Mucosa of descending colon (tissue), 3 donors: ENCODE measurements at regions of chr7 and their contacts with region 1.

Region 1: GRCh38 chr7:107879400-107880035 is 11.5 kb upstream of the DLD start:
- DNase-seq: peak in 1 of 3 donors; percentile 74
- ATAC-seq: peak; percentile 84
- H3K4me3 ChIP-seq: no peak overlapping the region
- H3K4me1 ChIP-seq: no peaks in the 10 kb centered on the region
- CTCF ChIP-seq: peak; percentile 51

Region 2: DNA sequence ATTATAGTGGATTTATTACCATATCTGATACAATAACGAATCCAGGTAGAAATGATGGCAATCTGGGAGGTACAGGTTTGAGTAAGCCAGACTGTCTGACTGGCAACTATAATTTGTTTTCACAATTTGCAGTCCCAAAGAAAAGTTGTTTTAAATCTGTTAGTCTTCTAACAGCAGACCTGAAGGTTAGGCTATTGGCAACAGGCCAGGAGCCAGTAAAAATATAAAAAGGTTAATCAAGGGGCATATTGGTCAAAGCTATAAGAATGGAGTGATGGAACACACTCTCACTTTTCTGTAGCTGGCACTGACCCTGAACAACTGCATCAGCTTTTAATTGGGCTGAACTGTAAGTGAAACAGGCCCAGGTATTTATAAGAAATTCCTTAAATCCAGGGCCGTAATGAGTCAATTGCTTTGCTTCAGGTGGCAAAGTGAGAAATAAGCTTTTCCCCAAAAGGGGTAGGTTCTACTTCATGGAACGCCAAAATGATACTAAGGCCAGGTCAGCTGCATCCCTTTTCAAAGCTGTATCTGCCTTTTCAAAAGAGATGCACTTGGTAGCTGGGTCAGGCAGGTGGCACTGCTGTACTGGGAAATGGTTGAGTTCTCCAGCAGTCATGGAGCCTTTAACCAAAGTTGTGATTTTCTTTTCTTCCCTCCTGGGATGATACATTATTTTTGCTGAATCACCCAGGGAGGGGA is 416.6 kb before region 1 on chr7:
- intact Hi-C with region 1: loop called in 1 of 2 experiments (anchors 10 kb)
- DNase-seq: peak in 2 of 3 donors; percentile 52 to 53
- ATAC-seq: peak; percentile 88
- H3K4me3 ChIP-seq: no peak overlapping the region
- H3K4me1 ChIP-seq: no peaks in the 10 kb centered on the region
- CTCF ChIP-seq: peak; percentile 41

Region 3: GRCh38 chr7:107743567-107744344 is 135.8 kb before region 1 on chr7 and contains the start of gene CBLL1:
- intact Hi-C with region 1: loop called (anchors 10 kb)
- DNase-seq: peak; percentile 97 to 98 (median 98)
- ATAC-seq: peak; percentile 95
- H3K4me3 ChIP-seq: peak within 1 kb of the TSS; percentile 76
- H3K4me1 ChIP-seq: peaks cover 26% of the 10 kb centered on the region
- CTCF ChIP-seq: peak; percentile 30
- total RNA-seq, gene CBLL1: 24.1 to 28.9 (median 25.4) TPM

Region 4: GRCh38 chr7:107785926-107786325 is 93.6 kb before region 1 on chr7:
- intact Hi-C with region 1: loop called in 1 of 2 experiments (anchors 10 kb)
- DNase-seq: no peak
- ATAC-seq: peak; percentile 13
- H3K4me3 ChIP-seq: no peak overlapping the region
- H3K4me1 ChIP-seq: no peaks in the 10 kb centered on the region
- CTCF ChIP-seq: no peak

Region 5: DNA sequence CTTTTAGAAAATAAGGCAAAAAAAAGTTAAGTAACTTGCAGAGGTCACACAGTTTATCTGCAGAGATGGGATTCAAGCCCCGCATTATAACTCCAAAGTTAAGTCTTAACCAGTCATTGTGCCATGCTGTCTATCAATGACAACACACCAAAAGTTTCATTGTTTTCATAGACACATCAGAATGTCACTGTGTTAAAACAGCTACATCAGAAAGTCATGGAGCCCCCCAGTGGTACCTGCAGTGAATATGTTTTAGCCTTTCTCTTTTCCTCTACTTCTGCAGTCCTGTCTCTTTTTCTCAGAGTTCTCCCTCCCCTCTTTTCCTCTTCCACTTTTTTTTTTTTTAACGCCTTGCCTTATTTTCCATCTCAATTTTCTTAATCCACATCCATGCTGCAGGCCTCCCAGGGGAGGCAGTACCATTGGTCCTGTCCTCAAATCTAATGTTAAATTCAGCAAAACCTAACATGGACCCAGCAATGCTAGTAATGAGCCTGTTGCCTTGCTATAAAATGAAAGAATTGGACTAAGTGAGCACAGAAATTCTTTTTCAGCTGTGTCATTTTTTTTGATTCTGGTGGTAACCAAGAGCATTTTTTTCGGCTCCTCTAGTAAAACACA is 580.5 kb after region 1 on chr7:
- intact Hi-C with region 1: no loop called
- DNase-seq: peak in 1 of 3 donors; percentile 32
- ATAC-seq: no peak
- H3K4me3 ChIP-seq: no peak overlapping the region
- H3K4me1 ChIP-seq: peaks cover 9% of the 10 kb centered on the region
- CTCF ChIP-seq: no peak